ENCODE measurements at regions of chr3 and their contacts with region 1.

Region 1: DNA sequence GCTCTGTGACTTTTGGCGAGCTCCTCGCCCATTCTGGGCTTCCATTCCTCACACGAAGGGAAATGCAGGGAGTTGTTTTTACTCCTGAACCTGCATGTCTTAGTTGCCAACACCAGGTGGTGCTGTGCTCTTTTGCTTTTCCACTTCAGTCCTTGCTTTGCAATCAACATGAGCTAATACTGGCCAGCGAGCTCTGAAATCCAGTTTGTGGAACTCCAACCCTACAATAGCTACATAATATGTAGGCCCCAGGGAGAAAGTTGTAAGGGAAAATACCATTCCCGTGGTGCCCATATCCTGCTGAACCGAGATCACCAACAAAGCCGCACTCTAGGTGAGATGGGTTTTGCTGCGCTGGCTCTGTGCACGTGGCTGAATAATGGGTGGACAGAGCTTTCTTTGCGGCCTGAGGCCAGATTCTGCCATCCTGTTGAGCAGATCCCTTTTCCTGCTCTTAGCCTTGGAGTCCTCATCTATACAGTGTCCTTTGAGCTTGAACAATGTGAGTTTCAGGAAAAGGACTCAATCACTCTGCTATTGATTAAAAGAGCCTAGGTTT is 25.0 kb downstream of the LSM3 start:
- DNase-seq: peak; percentile 48 to 75
- ATAC-seq: peak; percentile 74 to 80
- H3K4me3 ChIP-seq: no peak overlapping the region
- H3K27ac ChIP-seq: peak overlapping the region; percentile 82 to 90 (median 85)
- H3K4me1 ChIP-seq: peaks cover 6 to 23% of the 10 kb centered on the region in 2 donors
- H3K27me3 ChIP-seq: no peaks in the 10 kb centered on the region
- CTCF ChIP-seq: peak; percentile 79 to 93 (median 88)
- POLR2A ChIP-seq: no peak

Region 2: DNA sequence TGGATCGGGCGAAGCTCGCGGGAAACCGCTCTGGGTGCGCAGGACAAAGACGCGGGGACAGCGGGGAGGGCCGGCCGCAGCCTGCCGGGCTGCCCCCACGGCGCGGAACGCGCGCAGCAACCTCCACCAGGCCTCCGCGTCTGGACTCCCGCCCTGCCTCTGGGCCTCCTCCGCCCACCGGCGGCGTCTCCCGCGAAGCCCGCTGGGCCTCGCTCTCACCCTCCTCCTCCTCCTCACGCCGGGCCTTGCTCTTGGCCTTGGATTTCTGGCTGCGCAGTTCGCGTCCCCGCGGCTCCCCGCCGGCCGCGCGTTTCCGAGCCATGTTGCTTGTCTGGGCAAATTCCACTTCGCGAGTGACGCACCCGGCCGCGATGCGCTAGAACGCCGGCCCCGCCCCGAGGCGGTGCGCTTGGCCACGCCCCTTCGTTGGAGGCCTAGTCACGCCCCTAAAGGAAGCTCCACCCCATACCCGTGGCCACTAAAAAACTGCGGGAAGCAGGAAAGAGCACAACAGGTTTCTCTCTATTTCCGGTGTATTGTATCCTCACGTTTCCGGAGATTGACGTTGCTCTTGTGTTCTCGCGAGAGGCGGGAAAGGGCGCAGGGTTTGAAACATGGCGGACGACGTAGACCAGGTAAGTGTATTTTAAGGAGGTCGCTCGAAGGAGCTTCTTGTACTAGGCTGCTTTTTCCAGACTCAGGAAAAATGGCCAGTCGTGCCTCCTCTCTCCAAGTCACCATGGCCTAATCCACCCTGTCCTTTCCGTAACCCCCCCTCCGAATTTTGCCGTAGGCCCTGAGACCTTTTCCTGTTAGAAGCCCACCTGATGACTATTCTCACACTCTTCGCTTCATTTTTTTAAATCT is 25.1 kb before region 1 on chr3 and contains the starts of genes LSM3 and XPC:
- in situ Hi-C with region 1: no loop called
- intact Hi-C with region 1: loop called (anchors 2 kb)
- DNase-seq: peak; percentile 96 to 97
- ATAC-seq: peak; percentile 98
- H3K4me3 ChIP-seq: peak within 1 kb of the TSS; percentile 71 to 86 (median 75)
- H3K27ac ChIP-seq: peak within 1 kb of the TSS; percentile 86 to 91 (median 90)
- H3K4me1 ChIP-seq: peaks cover 31 to 53% of the 10 kb centered on the region in 2 donors
- H3K27me3 ChIP-seq: no peaks in the 10 kb centered on the region
- CTCF ChIP-seq: no peak
- POLR2A ChIP-seq: peak; percentile 95
- total RNA-seq, gene LSM3: 11.6 to 16.8 (median 14.2) TPM
- total RNA-seq, gene XPC: 22.0 to 30.6 (median 27.0) TPM

Region 3: DNA sequence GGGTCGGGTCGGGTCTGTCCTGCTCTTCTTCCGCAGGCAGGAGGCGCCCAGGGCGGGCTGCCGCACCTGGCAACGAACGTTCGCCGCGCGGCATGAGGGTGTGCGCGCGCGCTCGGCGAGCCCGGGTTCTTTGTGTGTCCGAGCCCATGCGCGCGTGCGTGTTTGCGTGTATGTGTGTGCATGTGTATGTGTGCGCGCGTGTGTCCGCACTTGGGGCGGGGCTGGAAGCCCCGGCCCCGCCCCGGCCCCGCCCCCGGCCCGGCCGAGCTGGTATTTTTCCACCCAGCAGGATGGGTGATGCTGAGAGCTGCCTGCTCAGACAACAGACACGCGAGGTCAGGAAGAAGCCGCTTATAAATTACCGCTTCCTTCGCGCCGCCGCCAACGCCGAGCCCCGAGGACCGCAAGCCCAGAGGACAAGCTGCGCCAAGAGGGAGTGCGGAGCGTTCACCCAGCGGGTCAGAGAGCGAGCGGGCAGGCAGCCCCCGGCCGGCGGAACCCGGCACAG is 198.8 kb after region 1 on chr3 and contains the start of gene SLC6A6:
- in situ Hi-C with region 1: no loop called
- intact Hi-C with region 1: loop called (anchors 10 kb)
- DNase-seq: peak; percentile 93 to 97
- ATAC-seq: peak; percentile 75 to 80
- H3K4me3 ChIP-seq: peak within 1 kb of the TSS; percentile 62 to 94 (median 82)
- H3K27ac ChIP-seq: peak within 1 kb of the TSS; percentile 96 to 97 (median 96)
- H3K4me1 ChIP-seq: peaks cover 39 to 40% of the 10 kb centered on the region in 2 donors
- H3K27me3 ChIP-seq: no peaks in the 10 kb centered on the region
- CTCF ChIP-seq: peak; percentile 55 to 68 (median 59)
- POLR2A ChIP-seq: peak; percentile 84 to 94
- total RNA-seq, gene SLC6A6: 42.1 to 119 (median 88.7) TPM

Region 4: DNA sequence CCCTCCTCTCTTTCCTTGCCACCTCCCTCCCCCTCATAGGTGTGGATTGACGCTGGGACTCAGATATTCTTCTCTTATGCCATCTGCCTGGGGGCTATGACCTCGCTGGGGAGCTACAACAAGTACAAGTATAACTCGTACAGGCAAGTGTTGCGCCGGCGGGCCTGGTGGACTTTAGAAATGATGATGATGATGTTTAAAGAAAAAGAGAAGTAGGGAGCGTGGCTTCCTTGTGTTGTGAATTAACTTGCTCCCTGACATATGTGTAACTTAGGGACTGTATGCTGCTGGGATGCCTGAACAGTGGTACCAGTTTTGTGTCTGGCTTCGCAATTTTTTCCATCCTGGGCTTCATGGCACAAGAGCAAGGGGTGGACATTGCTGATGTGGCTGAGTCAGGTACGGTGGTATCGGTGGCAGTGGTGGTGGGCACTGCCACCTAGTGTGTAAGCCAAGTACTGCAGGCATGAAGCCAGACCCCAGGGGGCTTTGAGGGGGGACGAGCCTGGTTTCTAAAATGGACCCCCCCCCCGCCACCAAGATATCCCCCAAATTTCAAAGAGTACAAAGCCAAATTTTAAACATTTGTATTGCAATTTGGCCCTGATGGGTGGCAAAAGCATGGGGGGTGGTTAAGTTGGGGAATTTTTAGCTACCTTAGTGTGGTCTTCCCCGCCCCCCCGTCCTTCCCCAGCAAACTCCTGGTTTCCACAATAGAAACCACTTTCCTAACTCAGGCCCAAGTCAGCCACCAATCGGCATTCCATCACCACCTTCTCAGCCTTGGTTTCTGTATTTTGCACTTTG is 264.4 kb after region 1 on chr3:
- in situ Hi-C with region 1: loop called (anchors 5 to 10 kb)
- intact Hi-C with region 1: loop called (anchors 1 kb)
- DNase-seq: no peak
- ATAC-seq: peak; percentile 32 to 59
- H3K4me3 ChIP-seq: no peak overlapping the region
- H3K27ac ChIP-seq: no peak overlapping the region
- H3K4me1 ChIP-seq: peaks cover 0 to 2% of the 10 kb centered on the region in 2 donors
- H3K27me3 ChIP-seq: no peaks in the 10 kb centered on the region
- CTCF ChIP-seq: peak; percentile 92 to 98 (median 97)
- POLR2A ChIP-seq: no peak